PC-3 (cell line): ENCODE measurements at regions of chr11 and their contacts with region 1.

Region 1: GRCh38 chr11:106399076-106399511 is 321.6 kb downstream of the AASDHPPT start:
- DNase-seq: peak; percentile 99
- ATAC-seq: peak; percentile 95
- H3K4me3 ChIP-seq: peak overlapping the region; percentile 41; the same call in 1 of the 2 replicates
- H3K27ac ChIP-seq: peak overlapping the region; percentile 93
- H3K4me1 ChIP-seq: peaks cover 41% of the 10 kb centered on the region
- H3K27me3 ChIP-seq: no peaks in the 10 kb centered on the region
- CTCF ChIP-seq: no peak

Region 2: GRCh38 chr11:106156290-106156937 is 242.7 kb before region 1 on chr11:
- CTCF ChIA-PET with region 1: no interaction called
- POLR2A ChIA-PET with region 1: no interaction called
- intact Hi-C with region 1: loop called (anchors 10 kb)
- DNase-seq: peak; percentile 76
- ATAC-seq: peak; percentile 59
- H3K4me3 ChIP-seq: no peak overlapping the region
- H3K27ac ChIP-seq: no peak overlapping the region
- H3K4me1 ChIP-seq: no peaks in the 10 kb centered on the region
- H3K27me3 ChIP-seq: no peaks in the 10 kb centered on the region
- CTCF ChIP-seq: peak; percentile 85

Region 3: DNA sequence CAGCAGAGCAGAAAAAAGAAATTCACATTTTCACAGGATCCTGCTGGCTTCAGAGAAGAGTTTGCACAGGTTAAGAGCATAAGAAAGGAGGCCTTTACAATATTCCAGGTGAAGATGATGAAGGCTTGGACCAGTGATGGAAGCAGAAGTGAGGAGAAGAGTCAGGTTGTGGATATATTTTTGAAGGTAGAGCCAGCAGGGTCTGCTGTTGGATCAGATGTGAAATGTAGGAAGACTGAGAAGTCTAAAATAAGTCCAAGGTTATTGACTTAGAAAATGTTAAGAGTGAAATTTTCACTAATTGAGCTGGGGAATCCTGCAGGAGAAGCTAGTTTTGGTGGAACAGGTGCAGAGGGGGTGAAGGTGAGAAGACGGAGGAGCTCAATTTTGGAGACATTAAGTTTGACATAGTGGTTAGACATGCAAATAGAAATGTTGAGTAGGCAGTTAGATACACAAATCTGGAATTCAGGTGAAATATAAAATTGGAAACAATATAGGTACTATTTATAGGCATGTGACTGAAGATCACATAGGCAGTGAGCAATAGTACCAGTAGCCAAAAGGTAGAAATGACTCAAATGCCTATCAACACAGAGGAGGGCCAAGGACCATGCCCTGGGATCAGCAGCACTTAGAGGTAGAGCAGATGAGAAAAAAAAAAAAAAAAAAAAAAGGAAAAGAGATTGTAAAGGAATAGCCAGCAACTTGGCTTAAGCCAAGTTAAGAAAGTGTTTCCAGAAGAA is 69.6 kb before region 1 on chr11:
- CTCF ChIA-PET with region 1: no interaction called
- POLR2A ChIA-PET with region 1: no interaction called
- intact Hi-C with region 1: loop called (anchors 5 kb)
- DNase-seq: peak; percentile 76
- ATAC-seq: peak; percentile 84
- H3K4me3 ChIP-seq: no peak overlapping the region
- H3K27ac ChIP-seq: no peak overlapping the region
- H3K4me1 ChIP-seq: peaks cover 28% of the 10 kb centered on the region
- H3K27me3 ChIP-seq: no peaks in the 10 kb centered on the region
- CTCF ChIP-seq: peak; percentile 33; the same call in 1 of the 2 replicates

Region 4: GRCh38 chr11:106424111-106424510 is 25.0 kb after region 1 on chr11:
- CTCF ChIA-PET with region 1: no interaction called
- POLR2A ChIA-PET with region 1: interaction called, 28 read pairs
- intact Hi-C with region 1: loop called (anchors 5 kb)
- DNase-seq: peak; percentile 98
- ATAC-seq: peak; percentile 93
- H3K4me3 ChIP-seq: 0 out of 2 replicates have a peak overlapping the region, but pooled peaks have one; percentile 2
- H3K27ac ChIP-seq: peak overlapping the region; percentile 56
- H3K4me1 ChIP-seq: peaks cover 52% of the 10 kb centered on the region
- H3K27me3 ChIP-seq: no peaks in the 10 kb centered on the region
- CTCF ChIP-seq: no peak

Region 5: GRCh38 chr11:106495046-106495445 is 96.0 kb after region 1 on chr11:
- CTCF ChIA-PET with region 1: interaction called, 3 read pairs
- POLR2A ChIA-PET with region 1: interaction called, 8 read pairs
- intact Hi-C with region 1: loop called (anchors 1 kb)
- DNase-seq: peak; percentile 93
- ATAC-seq: peak; percentile 95
- H3K4me3 ChIP-seq: no peak overlapping the region
- H3K27ac ChIP-seq: peak overlapping the region; percentile 68
- H3K4me1 ChIP-seq: peaks cover 39% of the 10 kb centered on the region
- H3K27me3 ChIP-seq: no peaks in the 10 kb centered on the region
- CTCF ChIP-seq: no peak

Region 6: GRCh38 chr11:107009190-107009589 is 610.1 kb after region 1 on chr11:
- CTCF ChIA-PET with region 1: no interaction called
- POLR2A ChIA-PET with region 1: no interaction called
- intact Hi-C with region 1: loop called (anchors 10 kb)
- DNase-seq: no peak
- ATAC-seq: no peak
- H3K4me3 ChIP-seq: no peak overlapping the region
- H3K27ac ChIP-seq: no peak overlapping the region
- H3K4me1 ChIP-seq: peaks cover 28% of the 10 kb centered on the region
- H3K27me3 ChIP-seq: no peaks in the 10 kb centered on the region
- CTCF ChIP-seq: peak; percentile 51